Heart right ventricle (tissue), 16 donors: ENCODE measurements at regions of chr2 and their contacts with region 1.

Region 1: DNA sequence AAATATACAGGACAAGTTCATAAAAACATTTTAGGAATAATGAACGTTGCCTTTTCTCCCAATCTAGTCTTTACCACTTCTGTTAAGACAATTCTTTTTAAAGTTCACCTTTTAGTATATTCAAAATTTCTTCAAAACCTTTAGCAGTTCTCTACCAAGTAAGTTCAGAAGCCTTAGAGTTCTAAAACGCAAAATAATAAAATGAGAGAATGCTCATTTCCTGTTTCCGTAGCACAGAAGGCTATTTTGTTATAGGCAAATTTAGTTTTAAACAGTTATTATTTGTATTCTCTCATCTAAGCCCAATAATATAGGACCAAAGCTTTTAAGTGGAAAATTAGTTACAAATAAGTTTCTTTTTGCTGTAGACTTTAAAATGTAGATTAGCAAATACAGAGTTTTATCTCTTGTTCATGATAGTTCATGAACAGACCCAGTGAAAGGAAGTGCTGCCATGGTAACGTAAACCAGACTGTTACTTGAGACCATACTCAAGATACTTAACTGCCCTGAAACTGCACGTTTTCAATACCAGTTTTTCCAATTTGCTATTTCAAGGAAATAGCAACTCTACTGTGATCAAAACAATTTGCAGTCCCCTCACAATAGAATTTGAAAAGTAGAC is 173.1 kb upstream of the STON1 start:
- DNase-seq: no peak
- ATAC-seq: no peak
- H3K4me3 ChIP-seq: no peak overlapping the region
- H3K27ac ChIP-seq: peak overlapping the region in 3 of 10 donors; percentile 11 to 76 (median 44)
- H3K4me1 ChIP-seq: peaks cover 3 to 63% (median 30%) of the 10 kb centered on the region in 9 donors
- H3K27me3 ChIP-seq: no peaks in the 10 kb centered on the region
- CTCF ChIP-seq: no peak

Region 2: GRCh38 chr2:48414980-48415835 is 58.4 kb after region 1 on chr2:
- intact Hi-C with region 1: loop called in 1 of 10 experiments (anchors 10 kb)
- DNase-seq: no peak
- ATAC-seq: peak; percentile 21 to 55 (median 46)
- H3K4me3 ChIP-seq: peak overlapping the region in 1 of 10 donors; percentile 9
- H3K27ac ChIP-seq: peak overlapping the region in 5 of 10 donors; percentile 18 to 60 (median 35)
- H3K4me1 ChIP-seq: peaks cover 13 to 56% (median 33%) of the 10 kb centered on the region in 9 donors
- H3K27me3 ChIP-seq: no peaks in the 10 kb centered on the region
- CTCF ChIP-seq: no peak